ENCODE measurements at regions of chr1 and their contacts with region 1.

Region 1: DNA sequence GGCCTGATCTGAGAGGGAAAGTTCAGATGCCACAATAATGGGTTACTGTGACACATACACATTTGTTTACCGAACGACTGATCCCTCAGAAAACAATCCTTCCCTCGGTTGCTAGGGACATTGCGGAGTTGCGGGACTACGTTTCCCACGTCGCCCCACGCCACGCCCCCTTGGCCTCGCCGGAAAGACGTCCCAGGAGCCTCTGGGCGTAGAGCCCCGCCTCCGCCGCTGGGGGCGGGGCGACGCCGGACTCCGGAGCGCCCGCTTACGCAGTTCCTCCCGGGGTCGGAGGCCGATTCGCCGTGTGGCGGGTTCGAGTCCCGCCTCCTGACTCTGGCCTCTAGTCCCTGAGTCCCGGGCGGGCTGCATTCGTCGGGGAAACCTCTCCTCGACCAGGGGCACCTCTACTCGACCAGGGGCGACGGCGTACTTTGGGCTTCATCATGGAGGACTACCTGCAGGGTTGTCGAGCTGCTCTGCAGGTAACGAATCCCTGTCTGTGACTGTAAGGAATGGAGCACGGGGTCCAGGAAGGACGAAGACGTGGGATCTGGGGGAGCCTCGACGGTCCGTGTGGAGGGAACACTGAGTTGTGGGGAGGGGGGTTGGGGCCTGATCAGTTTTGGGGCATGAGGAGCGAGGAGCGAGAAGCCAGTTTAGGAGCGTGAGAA is at the start of gene PRUNE1:
- DNase-seq: peak; percentile 99
- H3K4me3 Mint-ChIP-seq: peak within 1 kb of the TSS; percentile 96
- H3K27ac Mint-ChIP-seq: peak within 1 kb of the TSS; percentile 95
- H3K4me1 Mint-ChIP-seq: peaks cover 37% of the 10 kb centered on the region
- H3K27me3 Mint-ChIP-seq: no peaks in the 10 kb centered on the region
- CTCF ChIP-seq: no peak
- total RNA-seq, gene PRUNE1: 15.9 and 16.0 TPM in 2 replicates

Region 2: DNA sequence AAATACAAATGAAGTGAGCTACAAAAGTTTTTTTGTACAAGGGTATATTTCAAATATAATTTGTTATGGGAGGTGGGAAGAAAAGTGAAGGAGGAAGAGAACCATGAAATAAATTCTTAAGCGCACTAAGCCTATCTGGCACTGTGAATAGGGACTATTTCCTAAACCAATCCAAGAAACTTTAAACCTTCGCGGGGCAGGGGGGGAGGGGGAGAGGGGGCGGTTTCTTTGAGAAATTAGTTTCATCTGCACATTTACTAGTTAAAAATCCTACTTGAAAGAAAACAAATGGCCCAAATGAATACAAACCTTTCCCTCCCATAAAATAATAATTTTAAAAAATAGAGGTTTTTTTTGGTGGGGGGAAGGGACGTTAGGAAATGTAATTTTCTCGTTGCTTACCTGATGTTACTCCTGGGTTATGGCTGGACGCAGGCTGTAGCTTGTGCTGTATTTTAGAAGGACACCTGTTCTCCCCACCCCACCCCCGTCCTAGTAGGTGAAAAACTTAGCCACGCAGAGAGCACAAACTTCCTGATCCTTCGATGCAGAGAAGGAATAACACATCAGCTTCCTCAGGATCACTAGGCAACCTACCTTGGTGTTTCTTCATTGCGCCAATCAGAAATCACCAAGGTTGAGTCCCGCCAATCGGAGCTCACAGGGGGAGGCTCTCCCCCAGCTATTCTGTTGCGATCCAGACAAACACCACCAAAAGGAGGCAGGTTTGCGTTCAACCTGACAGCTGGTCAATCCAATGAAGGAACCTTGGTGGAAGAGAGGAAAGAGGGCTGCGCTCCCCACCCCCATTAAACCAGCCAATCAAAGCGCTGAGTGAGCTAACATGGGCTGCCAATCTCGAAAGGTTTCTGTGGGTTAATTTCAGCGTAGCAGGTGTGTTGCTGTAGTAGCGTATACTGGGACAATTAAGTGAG is 311.5 kb before region 1 on chr1 and contains the start of gene GOLPH3L:
- CTCF ChIA-PET with region 1: no interaction called
- intact Hi-C with region 1: no loop called
- DNase-seq: peak; percentile 97
- H3K4me3 Mint-ChIP-seq: peak within 1 kb of the TSS; percentile 74
- H3K27ac Mint-ChIP-seq: peak within 1 kb of the TSS; percentile 63
- H3K4me1 Mint-ChIP-seq: peaks cover 12% of the 10 kb centered on the region
- H3K27me3 Mint-ChIP-seq: no peaks in the 10 kb centered on the region
- CTCF ChIP-seq: no peak
- total RNA-seq, gene GOLPH3L: 64.7 and 71.6 TPM in 2 replicates

Region 3: GRCh38 chr1:150876119-150876454 is 132.2 kb before region 1 on chr1:
- CTCF ChIA-PET with region 1: interaction called, 3 read pairs
- intact Hi-C with region 1: loop called (anchors 5 kb)
- DNase-seq: peak; percentile 63
- H3K4me3 Mint-ChIP-seq: peak overlapping the region; percentile 85
- H3K27ac Mint-ChIP-seq: peak overlapping the region; percentile 80
- H3K4me1 Mint-ChIP-seq: peaks cover 11% of the 10 kb centered on the region
- H3K27me3 Mint-ChIP-seq: no peaks in the 10 kb centered on the region
- CTCF ChIP-seq: no peak

Region 4: DNA sequence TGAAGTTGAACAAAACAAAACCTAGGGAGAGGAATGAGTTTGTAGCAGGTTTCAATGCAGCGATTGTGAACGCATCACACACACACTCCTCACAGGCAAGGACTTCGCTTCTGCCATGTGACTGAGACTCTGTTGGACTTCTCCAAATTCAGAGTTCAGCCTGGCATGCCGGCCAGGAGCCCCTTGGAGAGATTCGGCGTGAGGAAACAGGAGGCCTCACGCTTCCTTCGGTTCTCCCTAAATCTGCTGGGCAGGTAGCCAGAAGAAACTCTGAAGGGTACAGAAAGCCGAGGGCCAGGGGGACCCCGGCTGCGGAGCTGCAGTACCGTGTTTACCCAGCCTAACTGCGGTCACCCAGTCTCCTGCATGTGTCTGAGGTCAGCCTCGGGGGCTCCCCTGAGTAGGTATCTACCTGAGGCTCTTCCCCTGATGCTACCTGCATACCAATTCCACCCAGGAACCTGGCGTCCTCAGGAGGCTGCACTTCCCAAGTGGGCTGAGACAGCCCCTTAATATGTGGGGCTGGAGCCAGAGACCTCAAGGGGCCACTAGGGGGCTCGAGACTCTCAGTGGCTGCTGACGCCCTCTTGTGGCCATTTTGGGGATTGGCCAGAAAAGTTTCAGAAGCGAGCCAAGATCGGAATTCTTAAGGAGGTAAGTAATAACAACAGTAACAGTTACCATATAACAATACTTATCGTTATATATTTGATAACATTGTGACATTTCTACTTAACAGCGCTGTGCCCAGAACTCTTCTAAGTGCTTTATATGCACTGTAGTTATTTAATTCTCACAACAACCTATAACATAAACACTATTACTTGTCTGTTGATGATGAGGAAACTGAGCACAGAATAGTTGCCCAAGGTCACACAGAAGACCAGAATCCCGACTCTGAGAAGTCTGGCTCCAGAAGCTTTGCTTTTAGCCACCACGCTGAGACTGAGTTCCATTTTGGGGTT is 29.0 kb before region 1 on chr1:
- CTCF ChIA-PET with region 1: interaction called, 23 read pairs
- intact Hi-C with region 1: no loop called
- DNase-seq: peak; percentile 93
- H3K4me3 Mint-ChIP-seq: no peak overlapping the region
- H3K27ac Mint-ChIP-seq: no peak overlapping the region
- H3K4me1 Mint-ChIP-seq: peaks cover 54% of the 10 kb centered on the region
- H3K27me3 Mint-ChIP-seq: no peaks in the 10 kb centered on the region
- CTCF ChIP-seq: peak; percentile 100

Region 5: DNA sequence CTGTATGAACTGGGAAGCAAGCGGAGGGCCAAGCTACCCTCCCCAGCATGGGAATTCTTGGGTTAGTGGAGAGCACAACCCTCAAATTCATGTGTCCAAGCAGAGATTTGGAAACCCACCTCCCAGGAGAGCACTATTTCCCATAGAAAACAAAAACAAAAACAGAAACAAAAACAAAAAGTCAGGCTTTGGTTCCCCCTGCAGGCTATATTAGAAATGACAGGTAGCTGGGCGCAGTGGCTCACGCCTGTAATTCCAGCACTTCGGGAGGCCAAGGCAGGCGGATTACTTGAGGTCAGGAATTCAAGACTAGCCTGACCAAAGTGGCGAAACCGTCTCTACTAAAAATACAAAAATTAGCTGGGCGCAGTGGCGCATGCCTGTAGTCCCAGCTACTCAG is 12.4 kb before region 1 on chr1:
- CTCF ChIA-PET with region 1: interaction called, 26 read pairs
- intact Hi-C with region 1: no loop called
- DNase-seq: peak; percentile 41
- H3K4me3 Mint-ChIP-seq: no peak overlapping the region
- H3K27ac Mint-ChIP-seq: no peak overlapping the region
- H3K4me1 Mint-ChIP-seq: no peaks in the 10 kb centered on the region
- H3K27me3 Mint-ChIP-seq: no peaks in the 10 kb centered on the region
- CTCF ChIP-seq: peak; percentile 90

Region 6: DNA sequence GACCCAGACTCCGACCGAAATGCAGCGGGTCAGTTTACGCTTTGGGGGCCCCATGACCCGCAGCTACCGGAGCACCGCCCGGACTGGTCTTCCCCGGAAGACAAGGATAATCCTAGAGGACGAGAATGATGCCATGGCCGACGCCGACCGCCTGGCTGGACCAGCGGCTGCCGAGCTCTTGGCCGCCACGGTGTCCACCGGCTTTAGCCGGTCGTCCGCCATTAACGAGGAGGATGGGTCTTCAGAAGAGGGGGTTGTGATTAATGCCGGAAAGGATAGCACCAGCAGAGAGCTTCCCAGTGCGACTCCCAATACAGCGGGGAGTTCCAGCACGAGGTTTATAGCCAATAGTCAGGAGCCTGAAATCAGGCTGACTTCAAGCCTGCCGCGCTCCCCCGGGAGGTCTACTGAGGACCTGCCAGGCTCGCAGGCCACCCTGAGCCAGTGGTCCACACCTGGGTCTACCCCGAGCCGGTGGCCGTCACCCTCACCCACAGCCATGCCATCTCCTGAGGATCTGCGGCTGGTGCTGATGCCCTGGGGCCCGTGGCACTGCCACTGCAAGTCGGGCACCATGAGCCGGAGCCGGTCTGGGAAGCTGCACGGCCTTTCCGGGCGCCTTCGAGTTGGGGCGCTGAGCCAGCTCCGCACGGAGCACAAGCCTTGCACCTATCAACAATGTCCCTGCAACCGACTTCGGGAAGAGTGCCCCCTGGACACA is 39.8 kb after region 1 on chr1:
- CTCF ChIA-PET with region 1: interaction called, 13 read pairs
- intact Hi-C with region 1: no loop called
- DNase-seq: peak; percentile 79
- H3K4me3 Mint-ChIP-seq: peak overlapping the region; percentile 85
- H3K27ac Mint-ChIP-seq: peak overlapping the region; percentile 57
- H3K4me1 Mint-ChIP-seq: no peaks in the 10 kb centered on the region
- H3K27me3 Mint-ChIP-seq: no peaks in the 10 kb centered on the region
- CTCF ChIP-seq: peak; percentile 71

Region 7: GRCh38 chr1:151070474-151071276 is 62.4 kb after region 1 on chr1 and contains the start of gene GABPB2:
- CTCF ChIA-PET with region 1: interaction called, 14 read pairs
- intact Hi-C with region 1: no loop called
- DNase-seq: peak; percentile 96
- H3K4me3 Mint-ChIP-seq: peak within 1 kb of the TSS; percentile 84
- H3K27ac Mint-ChIP-seq: peak within 1 kb of the TSS; percentile 99
- H3K4me1 Mint-ChIP-seq: peaks cover 7% of the 10 kb centered on the region
- H3K27me3 Mint-ChIP-seq: no peaks in the 10 kb centered on the region
- CTCF ChIP-seq: peak; percentile 91
- total RNA-seq, gene GABPB2: 10.9 and 13.6 TPM in 2 replicates